Caco-2 (cell line): ENCODE measurements at regions of chr11 and their contacts with region 1.

Region 1: GRCh38 chr11:65662799-65663638 is at the start of gene RELA:
- DNase-seq: peak; percentile 92 to 95
- H3K4me3 ChIP-seq: peak within 1 kb of the TSS; percentile 82
- H3K4me3 Mint-ChIP-seq: peak within 1 kb of the TSS; percentile 80
- H3K27ac Mint-ChIP-seq: peak within 1 kb of the TSS; percentile 66
- H3K4me1 ChIP-seq: peaks cover 16% of the 10 kb centered on the region; the same call in 1 of the 2 replicates
- H3K4me1 Mint-ChIP-seq: peaks cover 6% of the 10 kb centered on the region
- H3K27me3 ChIP-seq: no peaks in the 10 kb centered on the region
- H3K27me3 Mint-ChIP-seq: no peaks in the 10 kb centered on the region
- CTCF ChIP-seq: no peak
- total RNA-seq, gene RELA: 51.2 and 54.9 TPM in 2 replicates

Region 2: GRCh38 chr11:65615229-65615941 is 47.6 kb before region 1 on chr11 and contains the start of gene PCNX3:
- CTCF ChIA-PET with region 1: no interaction called
- POLR2A ChIA-PET with region 1: interaction called, 8 read pairs
- intact Hi-C with region 1: loop called (anchors 2 kb)
- DNase-seq: peak; percentile 100
- H3K4me3 ChIP-seq: peak within 1 kb of the TSS; percentile 91
- H3K4me3 Mint-ChIP-seq: peak within 1 kb of the TSS; percentile 96
- H3K27ac Mint-ChIP-seq: peak within 1 kb of the TSS; percentile 96
- H3K4me1 ChIP-seq: peaks cover 17% of the 10 kb centered on the region
- H3K4me1 Mint-ChIP-seq: peaks cover 24% of the 10 kb centered on the region
- H3K27me3 ChIP-seq: no peaks in the 10 kb centered on the region
- H3K27me3 Mint-ChIP-seq: no peaks in the 10 kb centered on the region
- CTCF ChIP-seq: no peak
- total RNA-seq, gene PCNX3: 52.7 and 52.8 TPM in 2 replicates

Region 3: GRCh38 chr11:65652511-65653231 is 10.3 kb before region 1 on chr11:
- CTCF ChIA-PET with region 1: no interaction called
- POLR2A ChIA-PET with region 1: interaction called, 14 read pairs
- intact Hi-C with region 1: no loop called
- DNase-seq: peak; percentile 93 to 96
- H3K4me3 ChIP-seq: peak overlapping the region; percentile 59
- H3K4me3 Mint-ChIP-seq: peak overlapping the region; percentile 76
- H3K27ac Mint-ChIP-seq: peak overlapping the region; percentile 96
- H3K4me1 ChIP-seq: peaks cover 18% of the 10 kb centered on the region
- H3K4me1 Mint-ChIP-seq: peaks cover 18% of the 10 kb centered on the region
- H3K27me3 ChIP-seq: no peaks in the 10 kb centered on the region
- H3K27me3 Mint-ChIP-seq: no peaks in the 10 kb centered on the region
- CTCF ChIP-seq: no peak

Region 4: GRCh38 chr11:65700391-65700790 is 37.4 kb after region 1 on chr11:
- CTCF ChIA-PET with region 1: no interaction called
- POLR2A ChIA-PET with region 1: no interaction called
- intact Hi-C with region 1: loop called (anchors 2 kb)
- DNase-seq: no peak
- H3K4me3 ChIP-seq: no peak overlapping the region
- H3K4me3 Mint-ChIP-seq: no peak overlapping the region
- H3K27ac Mint-ChIP-seq: no peak overlapping the region
- H3K4me1 ChIP-seq: no peaks in the 10 kb centered on the region
- H3K4me1 Mint-ChIP-seq: no peaks in the 10 kb centered on the region
- H3K27me3 ChIP-seq: no peaks in the 10 kb centered on the region; the same call in 1 of the 2 replicates
- H3K27me3 Mint-ChIP-seq: peaks cover 8% of the 10 kb centered on the region
- CTCF ChIP-seq: no peak

Region 5: DNA sequence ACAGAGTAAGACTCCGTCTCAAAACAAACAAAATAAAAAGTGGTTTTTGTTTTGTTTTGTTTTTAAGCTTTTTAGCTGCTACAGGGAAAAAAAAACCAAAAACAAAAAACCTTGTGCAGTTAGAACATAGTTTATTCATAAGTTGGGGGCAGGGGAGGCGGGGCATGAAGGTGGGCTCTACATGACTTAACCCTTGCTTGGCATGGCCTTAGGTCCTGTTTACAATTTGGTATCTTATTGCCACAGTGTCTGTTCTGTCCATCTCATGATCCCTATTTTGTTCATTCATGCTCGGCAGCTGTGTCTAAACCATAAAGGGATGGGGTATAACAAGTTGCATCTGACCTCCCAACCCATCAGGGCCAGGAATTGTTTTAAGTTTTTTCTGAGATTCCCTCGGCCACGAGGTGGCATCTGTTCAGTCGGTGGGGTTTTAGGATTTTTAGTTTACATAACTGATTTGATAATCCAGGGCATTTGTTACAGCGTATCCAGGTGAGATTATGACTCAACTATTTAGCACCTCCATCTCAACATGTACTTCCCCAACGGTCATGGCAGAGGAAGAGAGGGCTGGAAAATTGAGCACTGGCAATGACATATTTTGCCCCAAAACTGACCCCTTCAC is 110.9 kb after region 1 on chr11:
- CTCF ChIA-PET with region 1: no interaction called
- POLR2A ChIA-PET with region 1: no interaction called
- intact Hi-C with region 1: no loop called
- DNase-seq: no peak
- H3K4me3 ChIP-seq: no peak overlapping the region
- H3K4me3 Mint-ChIP-seq: no peak overlapping the region
- H3K27ac Mint-ChIP-seq: no peak overlapping the region
- H3K4me1 ChIP-seq: peaks cover 15% of the 10 kb centered on the region
- H3K4me1 Mint-ChIP-seq: peaks cover 15% of the 10 kb centered on the region
- H3K27me3 ChIP-seq: no peaks in the 10 kb centered on the region
- H3K27me3 Mint-ChIP-seq: no peaks in the 10 kb centered on the region
- CTCF ChIP-seq: no peak